Activated CD4-positive, alpha-beta T cell treated with anti-CD3 and anti-CD28 coated beads, Interleukin-2, amount 10 ng/mL, durations not matched to agents 24 days and 14 days (primary cell): ENCODE measurements at regions of chr6 and their contacts with region 1.

Region 1: GRCh38 chr6:152948150-152948768 is 34.6 kb downstream of the FBXO5 start:
- DNase-seq: peak; percentile 65
- H3K4me3 Mint-ChIP-seq: no peak overlapping the region
- H3K27ac Mint-ChIP-seq: no peak overlapping the region
- H3K4me1 Mint-ChIP-seq: peaks cover 8% of the 10 kb centered on the region
- H3K27me3 Mint-ChIP-seq: peaks cover 31% of the 10 kb centered on the region

Region 2: GRCh38 chr6:152748843-152749242 is 199.4 kb before region 1 on chr6:
- intact Hi-C with region 1: loop called (anchors 5 kb)
- DNase-seq: no peak
- H3K4me3 Mint-ChIP-seq: no peak overlapping the region
- H3K27ac Mint-ChIP-seq: no peak overlapping the region
- H3K4me1 Mint-ChIP-seq: no peaks in the 10 kb centered on the region
- H3K27me3 Mint-ChIP-seq: no peaks in the 10 kb centered on the region

Region 3: DNA sequence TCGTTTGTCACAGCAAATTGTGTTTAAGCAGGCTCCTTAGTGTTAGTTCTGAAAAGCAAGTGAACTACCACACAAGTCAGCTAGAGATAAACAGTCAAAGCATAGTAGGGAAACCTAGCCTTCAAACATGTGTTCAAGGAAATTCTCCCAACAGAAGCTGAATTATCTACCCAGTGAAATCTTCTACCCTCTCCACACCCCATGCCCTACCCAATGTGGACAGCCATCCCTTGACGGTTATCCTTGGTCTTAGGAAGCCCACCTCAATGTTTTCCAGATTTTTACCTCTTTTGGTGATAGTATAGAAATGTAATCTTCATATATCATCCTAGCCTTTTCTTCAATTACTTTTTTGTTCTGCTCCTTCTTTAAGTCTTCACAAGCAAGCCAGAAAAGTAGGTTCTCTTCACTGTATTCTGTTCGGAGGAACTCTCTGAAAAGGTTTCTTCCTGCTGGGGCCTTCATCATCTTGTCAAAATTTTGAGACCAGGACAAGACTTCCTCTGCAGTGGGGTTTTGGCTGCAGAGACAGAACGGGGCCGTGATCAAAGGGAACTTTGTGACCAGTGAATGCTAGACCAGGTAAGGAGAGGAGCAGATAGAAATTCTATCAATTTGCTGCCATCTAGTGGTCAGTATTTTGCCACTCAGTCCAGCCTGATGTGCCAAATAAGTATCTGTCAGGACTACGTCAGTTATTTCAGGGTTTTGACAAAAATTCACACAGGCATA is 75.9 kb after region 1 on chr6:
- intact Hi-C with region 1: loop called (anchors 2 kb)
- DNase-seq: peak; percentile 84
- H3K4me3 Mint-ChIP-seq: no peak overlapping the region
- H3K27ac Mint-ChIP-seq: no peak overlapping the region
- H3K4me1 Mint-ChIP-seq: no peaks in the 10 kb centered on the region
- H3K27me3 Mint-ChIP-seq: peaks cover 35% of the 10 kb centered on the region